GM18951 (cell line): ENCODE measurements at regions of chr7 and their contacts with region 1.

Region 1: DNA sequence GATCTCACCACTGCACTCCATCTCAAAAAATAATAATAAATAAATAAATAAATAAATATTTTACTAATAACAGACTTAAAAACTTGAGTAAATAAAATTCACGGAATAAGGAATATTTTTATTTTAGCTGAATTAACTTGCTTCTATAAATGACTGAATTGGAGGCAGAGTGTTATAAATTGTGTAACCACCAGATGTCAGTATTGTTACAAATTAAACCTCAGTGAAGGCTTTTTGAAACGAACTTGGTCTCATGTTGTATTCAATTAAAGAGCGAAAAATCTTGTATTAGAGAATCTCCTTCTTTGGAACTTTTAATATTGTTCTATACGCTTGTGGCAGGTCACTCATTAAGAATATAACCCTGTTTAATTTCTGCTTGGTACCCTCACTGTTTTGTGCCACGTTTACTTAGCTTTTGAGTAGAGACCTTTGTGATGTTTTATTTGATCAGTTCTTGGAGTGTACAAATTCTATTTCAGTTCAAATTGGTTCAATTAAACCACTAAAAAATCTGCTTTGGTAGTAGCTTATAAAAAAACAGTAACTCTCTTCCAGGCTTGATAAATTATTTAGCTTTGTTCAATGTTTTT is 45.6 kb upstream of the SCIN start:
- POLR2A ChIP-seq: no peak

Region 2: GRCh38 chr7:12625836-12626235 is 100.9 kb after region 1 on chr7:
- in situ Hi-C with region 1: loop called (anchors 5 kb)
- POLR2A ChIP-seq: no peak